Caco-2 (cell line): ENCODE measurements at regions of chr12 and their contacts with region 1.

Region 1: DNA sequence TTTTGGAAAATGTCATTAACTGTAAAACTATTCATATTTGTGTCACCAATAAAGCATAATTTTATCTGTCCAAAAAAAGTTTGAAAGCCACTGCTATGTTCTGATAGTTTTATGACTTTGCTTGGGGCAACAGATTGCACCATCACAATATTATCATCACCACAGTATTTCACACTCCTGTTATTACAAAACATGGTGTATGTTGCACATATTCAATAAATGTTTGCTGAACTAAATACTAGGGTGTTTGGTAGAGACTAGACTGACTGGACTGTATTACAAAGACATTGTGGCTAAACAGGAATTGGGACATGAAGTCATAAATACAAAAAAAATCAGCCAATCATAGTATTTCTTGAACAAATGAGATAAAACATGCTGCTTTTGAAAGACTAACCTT is 55.1 kb downstream of the PAWR start:
- DNase-seq: no peak
- H3K4me3 ChIP-seq: no peak overlapping the region
- H3K4me3 Mint-ChIP-seq: no peak overlapping the region
- H3K27ac Mint-ChIP-seq: no peak overlapping the region
- H3K4me1 ChIP-seq: peaks cover 6% of the 10 kb centered on the region; the same call in 1 of the 2 replicates
- H3K4me1 Mint-ChIP-seq: peaks cover 24% of the 10 kb centered on the region
- H3K27me3 ChIP-seq: no peaks in the 10 kb centered on the region
- H3K27me3 Mint-ChIP-seq: no peaks in the 10 kb centered on the region
- CTCF ChIP-seq: no peak

Region 2: DNA sequence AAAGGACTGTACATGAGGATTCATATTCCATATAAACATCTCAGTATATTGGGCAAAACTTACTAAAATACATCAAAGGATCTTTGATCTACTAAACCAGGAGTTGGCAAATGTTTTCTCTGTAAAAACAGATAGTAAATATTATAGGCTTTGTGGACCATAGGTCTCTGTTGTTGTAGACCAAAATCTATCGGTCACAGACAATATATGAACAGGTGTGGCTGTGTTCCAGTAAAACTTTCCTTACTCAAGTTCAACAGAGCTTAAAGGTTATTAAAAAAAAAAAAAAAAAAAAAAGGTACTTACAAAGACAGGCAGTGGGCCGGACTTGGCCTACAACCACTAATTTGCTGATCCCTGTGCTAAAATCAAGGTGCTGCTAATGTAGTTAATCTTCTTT is 14.8 kb after region 1 on chr12:
- CTCF ChIA-PET with region 1: no interaction called
- POLR2A ChIA-PET with region 1: no interaction called
- intact Hi-C with region 1: loop called (anchors 2 kb)
- DNase-seq: no peak
- H3K4me3 ChIP-seq: no peak overlapping the region
- H3K4me3 Mint-ChIP-seq: no peak overlapping the region
- H3K27ac Mint-ChIP-seq: no peak overlapping the region
- H3K4me1 ChIP-seq: peaks cover 14% of the 10 kb centered on the region
- H3K4me1 Mint-ChIP-seq: no peaks in the 10 kb centered on the region
- H3K27me3 ChIP-seq: no peaks in the 10 kb centered on the region
- H3K27me3 Mint-ChIP-seq: no peaks in the 10 kb centered on the region
- CTCF ChIP-seq: no peak

Region 3: GRCh38 chr12:79710707-79711483 is 75.2 kb after region 1 on chr12:
- CTCF ChIA-PET with region 1: no interaction called
- POLR2A ChIA-PET with region 1: no interaction called
- intact Hi-C with region 1: no loop called
- DNase-seq: no peak
- H3K4me3 ChIP-seq: no peak overlapping the region
- H3K4me3 Mint-ChIP-seq: no peak overlapping the region
- H3K27ac Mint-ChIP-seq: no peak overlapping the region
- H3K4me1 ChIP-seq: peaks cover 10% of the 10 kb centered on the region
- H3K4me1 Mint-ChIP-seq: peaks cover 16% of the 10 kb centered on the region
- H3K27me3 ChIP-seq: no peaks in the 10 kb centered on the region
- H3K27me3 Mint-ChIP-seq: no peaks in the 10 kb centered on the region
- CTCF ChIP-seq: no peak